ENCODE measurements at regions of chr22 and their contacts with region 1.

Region 1: DNA sequence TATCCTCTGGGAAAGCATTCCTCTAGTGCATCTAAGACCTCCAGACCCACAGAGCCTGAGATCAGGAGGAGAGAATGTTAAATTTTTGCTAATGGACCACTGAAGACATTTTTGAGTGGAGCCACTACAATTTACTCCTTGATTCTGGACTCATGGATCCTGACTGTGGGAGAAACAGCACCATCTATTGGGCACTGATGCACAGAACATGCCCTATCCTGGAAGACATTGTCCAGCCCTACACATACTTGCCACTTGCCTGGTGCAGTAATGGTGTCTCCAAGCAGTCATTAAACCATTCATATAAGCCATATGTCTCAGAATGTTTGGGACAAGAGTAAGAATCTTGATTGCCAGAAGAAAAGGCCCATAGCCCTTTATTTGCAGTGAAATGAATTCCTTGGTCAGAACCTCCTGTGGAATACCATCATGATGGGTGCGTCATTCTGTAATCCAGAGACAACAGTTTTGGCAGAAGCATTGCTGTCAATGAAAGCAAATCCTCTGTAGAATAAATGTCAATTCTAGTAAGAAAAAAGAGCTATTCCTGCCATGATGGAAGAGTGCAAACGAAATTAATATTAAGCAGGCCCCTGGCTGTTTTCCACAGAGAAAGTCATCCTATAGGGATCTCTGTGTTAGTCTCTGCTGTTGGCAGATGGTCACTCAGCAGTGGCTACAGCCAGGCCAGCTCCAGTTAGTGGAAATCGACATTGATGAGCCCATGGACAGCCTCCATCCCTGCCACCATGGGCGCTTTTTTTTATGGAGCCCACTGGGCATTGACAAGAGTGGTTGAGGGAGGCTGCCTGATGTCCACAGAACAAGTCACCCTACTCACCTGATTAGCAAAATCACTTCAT is 43.5 kb downstream of the GGTLC2 start:
- DNase-seq: peak in 5 of 14 experiments; percentile 5 to 52 (median 38)
- ATAC-seq: peak; percentile 41
- H3K4me3 ChIP-seq: no peak overlapping the region
- H3K4me3 Mint-ChIP-seq: no peak overlapping the region
- H3K27ac ChIP-seq: no peak overlapping the region
- H3K27ac Mint-ChIP-seq: no peak overlapping the region
- H3K4me1 ChIP-seq: no peaks in the 10 kb centered on the region
- H3K4me1 Mint-ChIP-seq: no peaks in the 10 kb centered on the region
- H3K27me3 ChIP-seq: no peaks in the 10 kb centered on the region
- H3K27me3 Mint-ChIP-seq: no peaks in the 10 kb centered on the region
- CTCF ChIP-seq: peak; percentile 64

Region 2: GRCh38 chr22:22593964-22594656 is 93.8 kb before region 1 on chr22:
- CTCF ChIA-PET with region 1: no interaction called
- POLR2A ChIA-PET with region 1: no interaction called
- intact Hi-C with region 1: loop called in 1 of 2 experiments (anchors 2 kb)
- DNase-seq: peak; percentile 7 to 76 (median 42)
- ATAC-seq: peak; percentile 60
- H3K4me3 ChIP-seq: no peak overlapping the region
- H3K4me3 Mint-ChIP-seq: no peak overlapping the region
- H3K27ac ChIP-seq: no peak overlapping the region
- H3K27ac Mint-ChIP-seq: no peak overlapping the region
- H3K4me1 ChIP-seq: peaks cover 3% of the 10 kb centered on the region
- H3K4me1 Mint-ChIP-seq: no peaks in the 10 kb centered on the region
- H3K27me3 ChIP-seq: peaks cover 0 to 3% of the 10 kb centered on the region in 2 experiments
- H3K27me3 Mint-ChIP-seq: peaks cover 6% of the 10 kb centered on the region
- CTCF ChIP-seq: peak; percentile 76

Region 3: DNA sequence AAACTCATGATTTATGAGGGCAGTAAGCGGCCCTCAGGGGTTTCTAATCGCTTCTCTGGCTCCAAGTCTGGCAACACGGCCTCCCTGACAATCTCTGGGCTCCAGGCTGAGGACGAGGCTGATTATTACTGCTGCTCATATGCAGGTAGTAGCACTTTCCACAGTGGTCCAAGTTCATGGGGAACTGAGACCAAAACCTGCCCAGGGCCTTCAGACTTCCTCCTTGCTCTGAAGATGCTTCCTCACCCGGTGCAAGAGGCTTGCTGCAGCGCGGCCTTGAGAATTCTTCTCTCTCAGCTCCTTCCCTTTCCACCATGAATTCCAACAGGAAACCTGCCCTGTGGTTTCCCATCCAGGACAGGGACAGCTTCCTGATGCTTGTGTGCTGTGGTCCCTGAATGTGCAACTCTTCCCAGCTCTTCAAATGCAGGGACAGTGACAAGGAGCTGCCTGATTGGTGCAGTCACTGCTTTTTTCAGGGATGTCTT is 10.4 kb after region 1 on chr22:
- CTCF ChIA-PET with region 1: no interaction called
- POLR2A ChIA-PET with region 1: no interaction called
- intact Hi-C with region 1: no loop called
- DNase-seq: no peak
- ATAC-seq: no peak
- H3K4me3 ChIP-seq: no peak overlapping the region
- H3K4me3 Mint-ChIP-seq: no peak overlapping the region
- H3K27ac ChIP-seq: no peak overlapping the region
- H3K27ac Mint-ChIP-seq: no peak overlapping the region
- H3K4me1 ChIP-seq: no peaks in the 10 kb centered on the region
- H3K4me1 Mint-ChIP-seq: no peaks in the 10 kb centered on the region
- H3K27me3 ChIP-seq: no peaks in the 10 kb centered on the region
- H3K27me3 Mint-ChIP-seq: no peaks in the 10 kb centered on the region
- CTCF ChIP-seq: no peak

Region 4: GRCh38 chr22:22761963-22762772 is 74.3 kb after region 1 on chr22:
- CTCF ChIA-PET with region 1: no interaction called
- POLR2A ChIA-PET with region 1: no interaction called
- intact Hi-C with region 1: no loop called
- DNase-seq: no peak
- ATAC-seq: no peak
- H3K4me3 ChIP-seq: no peak overlapping the region
- H3K4me3 Mint-ChIP-seq: no peak overlapping the region
- H3K27ac ChIP-seq: no peak overlapping the region
- H3K27ac Mint-ChIP-seq: no peak overlapping the region
- H3K4me1 ChIP-seq: peaks cover 45% of the 10 kb centered on the region
- H3K4me1 Mint-ChIP-seq: peaks cover 13% of the 10 kb centered on the region
- H3K27me3 ChIP-seq: no peaks in the 10 kb centered on the region
- H3K27me3 Mint-ChIP-seq: peaks cover 7% of the 10 kb centered on the region
- CTCF ChIP-seq: no peak

Measured in CD4-positive, alpha-beta T cell (primary cell).